Panc1 (cell line): ENCODE measurements at regions of chr12 and their contacts with region 1.

Region 1: GRCh38 chr12:12736759-12737676 is 19.9 kb downstream of the CDKN1B start:
- DNase-seq: no peak
- ATAC-seq: peak; percentile 64
- H3K4me3 ChIP-seq: peak overlapping the region in 1 of 2 experiments; percentile 27; a peak in 1 of 4 replicates
- H3K27ac ChIP-seq: peak overlapping the region; percentile 98
- H3K4me1 ChIP-seq: peaks cover 34% of the 10 kb centered on the region
- H3K27me3 ChIP-seq: no peaks in the 10 kb centered on the region
- CTCF ChIP-seq: peak; percentile 72

Region 2: DNA sequence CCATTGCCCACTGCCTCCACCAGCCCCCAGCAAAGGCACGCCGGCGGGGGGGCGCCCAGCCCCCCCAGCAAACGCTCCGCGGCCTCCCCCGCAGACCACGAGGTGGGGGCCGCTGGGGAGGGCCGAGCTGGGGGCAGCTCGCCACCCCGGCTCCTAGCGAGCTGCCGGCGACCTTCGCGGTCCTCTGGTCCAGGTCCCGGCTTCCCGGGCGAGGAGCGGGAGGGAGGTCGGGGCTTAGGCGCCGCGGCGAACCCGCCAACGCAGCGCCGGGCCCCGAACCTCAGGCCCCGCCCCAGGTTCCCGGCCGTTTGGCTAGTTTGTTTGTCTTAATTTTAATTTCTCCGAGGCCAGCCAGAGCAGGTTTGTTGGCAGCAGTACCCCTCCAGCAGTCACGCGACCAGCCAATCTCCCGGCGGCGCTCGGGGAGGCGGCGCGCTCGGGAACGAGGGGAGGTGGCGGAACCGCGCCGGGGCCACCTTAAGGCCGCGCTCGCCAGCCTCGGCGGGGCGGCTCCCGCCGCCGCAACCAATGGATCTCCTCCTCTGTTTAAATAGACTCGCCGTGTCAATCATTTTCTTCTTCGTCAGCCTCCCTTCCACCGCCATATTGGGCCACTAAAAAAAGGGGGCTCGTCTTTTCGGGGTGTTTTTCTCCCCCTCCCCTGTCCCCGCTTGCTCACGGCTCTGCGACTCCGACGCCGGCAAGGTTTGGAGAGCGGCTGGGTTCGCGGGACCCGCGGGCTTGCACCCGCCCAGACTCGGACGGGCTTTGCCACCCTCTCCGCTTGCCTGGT is 20.0 kb before region 1 on chr12 and contains the start of gene CDKN1B:
- CTCF ChIA-PET with region 1: interaction called, 12 read pairs
- POLR2A ChIA-PET with region 1: no interaction called
- in situ Hi-C with region 1: no loop called
- intact Hi-C with region 1: no loop called
- DNase-seq: no peak
- ATAC-seq: peak; percentile 86
- H3K4me3 ChIP-seq: peak within 1 kb of the TSS; percentile 72 to 93
- H3K27ac ChIP-seq: peak within 1 kb of the TSS; percentile 99
- H3K4me1 ChIP-seq: peaks cover 35% of the 10 kb centered on the region
- H3K27me3 ChIP-seq: no peaks in the 10 kb centered on the region
- CTCF ChIP-seq: no peak
- total RNA-seq, gene CDKN1B: 25.9 TPM

Region 3: GRCh38 chr12:13371367-13371766 is 634.3 kb after region 1 on chr12:
- CTCF ChIA-PET with region 1: no interaction called
- POLR2A ChIA-PET with region 1: interaction called, 12 read pairs
- in situ Hi-C with region 1: no loop called
- intact Hi-C with region 1: no loop called
- DNase-seq: no peak
- ATAC-seq: no peak
- H3K4me3 ChIP-seq: no peak overlapping the region
- H3K27ac ChIP-seq: no peak overlapping the region
- H3K4me1 ChIP-seq: no peaks in the 10 kb centered on the region
- H3K27me3 ChIP-seq: no peaks in the 10 kb centered on the region; the same call in 1 of the 2 replicates
- CTCF ChIP-seq: no peak